Activated naive CD4-positive, alpha-beta T cell treated with anti-CD3 and anti-CD28 coated beads for 36 hours (primary cell): ENCODE measurements at regions of chrX and their contacts with region 1.

Region 1: DNA sequence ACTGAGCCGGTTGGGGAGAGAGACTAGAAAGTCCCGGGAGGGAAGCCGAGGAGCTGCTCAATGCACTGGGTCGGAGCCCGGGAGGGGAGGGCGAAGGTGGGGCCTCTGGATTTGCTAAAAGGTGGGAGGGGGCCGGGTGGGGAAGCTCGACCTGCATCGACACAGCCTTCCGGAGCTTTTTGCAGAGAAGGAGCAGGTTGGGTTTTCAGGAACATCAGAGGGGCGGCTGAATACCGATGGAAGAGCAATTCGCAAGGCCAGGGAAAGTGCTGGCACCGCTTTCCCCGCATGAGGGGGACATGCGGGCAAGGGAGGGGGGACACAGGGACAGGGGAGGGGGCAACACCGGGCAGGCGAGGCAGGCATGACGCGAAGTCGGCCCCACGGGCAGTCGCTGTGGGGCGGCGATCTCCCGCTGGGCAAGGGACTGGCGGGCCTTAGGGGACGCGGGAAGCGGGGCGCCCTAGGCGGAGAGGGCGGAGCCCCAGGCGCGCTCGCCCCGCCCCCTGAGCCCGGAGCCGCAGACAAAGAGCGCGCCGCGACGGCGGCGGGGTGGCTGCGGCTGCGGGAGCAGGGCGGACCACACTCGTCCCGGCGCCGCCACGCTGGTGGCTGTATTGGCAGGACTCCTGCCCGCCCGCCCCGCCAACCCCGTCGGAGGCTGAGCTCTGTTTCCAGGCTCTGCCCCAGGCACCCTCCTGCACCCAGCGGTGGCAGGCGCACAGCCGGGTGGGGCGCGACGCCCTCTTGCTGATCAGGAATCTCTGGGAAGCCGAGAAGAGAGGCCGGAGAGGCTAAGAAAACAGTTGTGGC is 11.6 kb downstream of the PDZD4 start:
- DNase-seq: peak; percentile 42
- H3K4me3 Mint-ChIP-seq: peak overlapping the region; percentile 60
- H3K27ac Mint-ChIP-seq: no peak overlapping the region
- H3K4me1 Mint-ChIP-seq: peaks cover 48% of the 10 kb centered on the region
- H3K27me3 Mint-ChIP-seq: no peaks in the 10 kb centered on the region

Region 2: DNA sequence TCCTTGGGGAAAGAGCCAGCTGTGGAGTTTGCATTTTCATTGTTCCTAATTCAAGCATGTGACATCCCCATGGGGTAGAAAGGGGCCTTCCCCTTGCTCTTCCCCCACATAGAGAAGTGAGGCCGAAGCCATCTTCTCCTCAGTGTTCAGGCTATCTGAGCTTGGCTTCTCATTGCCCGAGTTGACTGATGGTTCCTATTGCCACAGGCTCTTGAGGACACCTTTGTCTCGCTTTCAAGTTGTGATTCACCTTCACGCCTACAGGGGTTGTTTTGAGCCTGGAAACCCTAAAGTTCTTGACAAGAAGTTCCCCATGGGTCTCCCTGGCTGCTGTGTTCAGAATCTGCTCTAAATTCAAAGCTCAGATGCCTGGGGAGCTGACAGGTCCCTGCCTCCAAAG is 244.8 kb before region 1 on chrX:
- CTCF ChIA-PET with region 1: no interaction called
- intact Hi-C with region 1: no loop called
- DNase-seq: peak; percentile 5
- H3K4me3 Mint-ChIP-seq: no peak overlapping the region
- H3K27ac Mint-ChIP-seq: no peak overlapping the region
- H3K4me1 Mint-ChIP-seq: peaks cover 3% of the 10 kb centered on the region
- H3K27me3 Mint-ChIP-seq: no peaks in the 10 kb centered on the region

Region 3: DNA sequence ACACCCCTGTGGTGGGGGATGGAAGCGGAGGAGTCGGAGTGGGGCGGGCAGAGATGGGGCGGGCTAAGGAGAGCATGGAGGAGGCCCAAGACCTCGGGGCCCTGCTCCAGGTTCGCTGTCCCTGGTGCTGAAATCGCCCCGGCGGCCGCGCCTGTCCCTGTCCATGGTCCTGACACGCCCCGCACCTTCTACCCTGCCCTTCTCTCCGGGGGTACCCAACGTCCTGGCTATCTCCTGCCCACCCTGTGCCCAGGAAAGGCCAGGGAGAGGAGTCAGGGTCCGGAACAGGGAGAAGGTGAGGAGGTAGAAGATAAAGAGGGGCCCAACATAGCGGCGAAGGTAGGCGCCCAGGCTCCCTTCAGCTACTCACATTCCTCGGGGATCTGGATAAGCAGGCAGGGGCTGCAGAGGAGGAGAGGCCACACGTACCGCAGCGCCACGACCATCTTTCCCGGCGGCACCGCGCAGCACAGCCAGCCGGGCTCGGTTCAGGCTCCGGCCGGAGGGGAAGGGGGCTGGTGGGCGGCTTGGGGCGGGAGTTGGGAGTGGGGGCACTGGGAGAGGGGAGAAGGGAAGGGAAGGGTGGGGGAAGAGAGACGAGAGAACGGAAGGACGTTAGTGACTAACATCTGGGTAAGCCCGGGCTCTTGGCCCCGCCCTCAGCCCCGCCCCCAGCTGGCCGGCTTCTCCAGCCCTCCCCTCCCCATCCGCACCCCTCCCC is 56.8 kb after region 1 on chrX:
- CTCF ChIA-PET with region 1: no interaction called
- intact Hi-C with region 1: loop called (anchors 5 kb)
- DNase-seq: peak; percentile 72
- H3K4me3 Mint-ChIP-seq: no peak overlapping the region
- H3K27ac Mint-ChIP-seq: no peak overlapping the region
- H3K4me1 Mint-ChIP-seq: peaks cover 18% of the 10 kb centered on the region
- H3K27me3 Mint-ChIP-seq: peaks cover 5% of the 10 kb centered on the region

Region 4: GRCh38 chrX:153934473-153935325 is 115.9 kb after region 1 on chrX and contains the start of gene NAA10:
- CTCF ChIA-PET with region 1: no interaction called
- intact Hi-C with region 1: no loop called
- DNase-seq: peak; percentile 53
- H3K4me3 Mint-ChIP-seq: peak within 1 kb of the TSS; percentile 80
- H3K27ac Mint-ChIP-seq: peak within 1 kb of the TSS; percentile 69
- H3K4me1 Mint-ChIP-seq: peaks cover 37% of the 10 kb centered on the region
- H3K27me3 Mint-ChIP-seq: no peaks in the 10 kb centered on the region
- total RNA-seq, gene NAA10: 120 to 121 TPM